Endothelial cell of umbilical vein (primary cell): ENCODE measurements at regions of chr6 and their contacts with region 1.

Region 1: GRCh38 chr6:156890627-156891314 is 113.6 kb downstream of the ARID1B start:
- DNase-seq: no peak
- H3K4me3 ChIP-seq: no peak overlapping the region
- H3K27ac ChIP-seq: no peak overlapping the region
- H3K4me1 ChIP-seq: peaks cover 10% of the 10 kb centered on the region
- H3K27me3 ChIP-seq: no peaks in the 10 kb centered on the region
- CTCF ChIP-seq: no peak
- POLR2A ChIP-seq: no peak

Region 2: DNA sequence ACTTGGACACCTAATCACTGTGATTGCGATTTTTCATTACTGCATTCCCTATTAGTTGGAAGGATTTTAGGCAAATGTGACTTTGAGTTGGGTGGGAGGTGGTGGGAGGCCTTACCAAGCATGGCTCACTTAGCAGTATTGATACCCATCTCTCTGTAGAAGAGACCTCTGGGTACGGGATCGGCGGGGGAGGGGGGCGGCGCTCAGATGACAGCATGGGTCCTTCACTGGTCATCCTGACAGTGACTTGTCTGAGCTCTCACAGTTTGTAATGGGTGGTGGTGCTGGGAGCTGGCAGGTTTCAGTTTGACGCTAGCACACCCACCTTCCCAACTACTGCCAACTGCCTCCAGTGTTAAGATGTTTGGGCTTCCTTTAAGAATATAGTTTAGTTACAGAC is 117.8 kb after region 1 on chr6:
- CTCF ChIA-PET with region 1: no interaction called
- POLR2A ChIA-PET with region 1: no interaction called
- dilution Hi-C with region 1: no loop called
- intact Hi-C with region 1: loop called (anchors 5 kb)
- DNase-seq: no peak
- H3K4me3 ChIP-seq: no peak overlapping the region
- H3K27ac ChIP-seq: no peak overlapping the region
- H3K4me1 ChIP-seq: peaks cover 6% of the 10 kb centered on the region
- H3K27me3 ChIP-seq: no peaks in the 10 kb centered on the region
- CTCF ChIP-seq: no peak
- POLR2A ChIP-seq: no peak